ENCODE measurements at regions of chr10 and their contacts with region 1.

Region 1: GRCh38 chr10:28280652-28281051 is 22.2 kb downstream of the MPP7 start:
- DNase-seq: no peak
- H3K4me3 ChIP-seq: no peak overlapping the region
- H3K27ac ChIP-seq: no peak overlapping the region
- H3K4me1 ChIP-seq: no peaks in the 10 kb centered on the region
- H3K27me3 ChIP-seq: no peaks in the 10 kb centered on the region
- CTCF ChIP-seq: no peak
- POLR2A ChIP-seq: no peak

Region 2: GRCh38 chr10:27680006-27680557 is 600.6 kb before region 1 on chr10:
- intact Hi-C with region 1: no loop called
- DNase-seq: no peak
- H3K4me3 ChIP-seq: no peak overlapping the region
- H3K27ac ChIP-seq: no peak overlapping the region
- H3K4me1 ChIP-seq: no peaks in the 10 kb centered on the region
- H3K27me3 ChIP-seq: no peaks in the 10 kb centered on the region
- CTCF ChIP-seq: no peak
- POLR2A ChIP-seq: no peak

Region 3: DNA sequence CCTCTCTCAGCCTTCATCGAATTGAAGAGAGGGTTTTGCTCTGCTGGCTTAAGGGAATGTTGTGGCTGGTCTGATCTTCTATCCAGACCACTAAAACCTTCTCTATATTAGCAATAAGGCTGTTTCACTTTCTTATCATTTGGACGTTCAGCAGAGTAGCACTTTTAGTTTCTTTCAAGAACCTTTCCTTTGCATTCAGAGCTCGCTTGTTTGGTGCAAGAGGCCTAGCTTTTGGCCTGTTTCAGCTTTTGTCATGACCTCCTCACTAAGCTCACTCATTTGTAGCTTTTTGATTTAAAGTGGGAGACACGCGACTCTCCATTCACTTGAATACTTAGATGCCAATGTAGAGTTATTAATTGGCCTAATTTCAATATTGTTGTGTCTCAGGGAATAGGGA is 18.3 kb after region 1 on chr10:
- intact Hi-C with region 1: loop called (anchors 1 kb)
- DNase-seq: no peak
- H3K4me3 ChIP-seq: no peak overlapping the region
- H3K27ac ChIP-seq: no peak overlapping the region
- H3K4me1 ChIP-seq: no peaks in the 10 kb centered on the region
- H3K27me3 ChIP-seq: no peaks in the 10 kb centered on the region
- CTCF ChIP-seq: no peak
- POLR2A ChIP-seq: no peak

Region 4: DNA sequence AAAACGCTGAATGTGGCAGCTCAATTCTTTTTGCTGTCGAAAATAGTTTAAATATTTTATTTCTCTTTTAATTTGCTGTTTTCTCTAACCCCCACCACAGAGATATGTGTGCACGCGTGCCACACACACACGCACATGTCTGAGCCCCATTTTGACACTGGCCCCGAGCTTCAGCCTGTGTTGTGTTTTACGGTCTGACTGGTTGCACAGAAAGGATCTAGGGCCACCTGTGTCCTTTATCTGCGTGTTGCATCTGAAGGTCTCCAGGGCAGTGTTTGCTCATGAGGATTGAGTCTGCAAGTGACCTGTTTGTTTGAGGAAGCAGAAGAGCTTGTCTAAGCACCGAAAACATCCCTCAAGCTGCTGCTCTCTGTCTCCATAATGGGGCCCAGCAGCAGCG is 741.8 kb after region 1 on chr10:
- intact Hi-C with region 1: no loop called
- DNase-seq: no peak
- H3K4me3 ChIP-seq: no peak overlapping the region
- H3K27ac ChIP-seq: no peak overlapping the region
- H3K4me1 ChIP-seq: no peaks in the 10 kb centered on the region
- H3K27me3 ChIP-seq: no peaks in the 10 kb centered on the region
- CTCF ChIP-seq: no peak
- POLR2A ChIP-seq: no peak